CD4-positive, alpha-beta T cell (primary cell): ENCODE measurements at regions of chr4 and their contacts with region 1.

Region 1: GRCh38 chr4:106266201-106266600 is 49.8 kb downstream of the TBCK start:
- DNase-seq: peak in 3 of 14 experiments; percentile 11 to 27 (median 20)
- ATAC-seq: no peak
- H3K4me3 ChIP-seq: no peak overlapping the region
- H3K4me3 Mint-ChIP-seq: no peak overlapping the region
- H3K27ac ChIP-seq: no peak overlapping the region
- H3K27ac Mint-ChIP-seq: no peak overlapping the region
- H3K4me1 ChIP-seq: no peaks in the 10 kb centered on the region
- H3K4me1 Mint-ChIP-seq: peaks cover 3% of the 10 kb centered on the region
- H3K27me3 ChIP-seq: no peaks in the 10 kb centered on the region
- H3K27me3 Mint-ChIP-seq: no peaks in the 10 kb centered on the region
- CTCF ChIP-seq: peak; percentile 31

Region 2: DNA sequence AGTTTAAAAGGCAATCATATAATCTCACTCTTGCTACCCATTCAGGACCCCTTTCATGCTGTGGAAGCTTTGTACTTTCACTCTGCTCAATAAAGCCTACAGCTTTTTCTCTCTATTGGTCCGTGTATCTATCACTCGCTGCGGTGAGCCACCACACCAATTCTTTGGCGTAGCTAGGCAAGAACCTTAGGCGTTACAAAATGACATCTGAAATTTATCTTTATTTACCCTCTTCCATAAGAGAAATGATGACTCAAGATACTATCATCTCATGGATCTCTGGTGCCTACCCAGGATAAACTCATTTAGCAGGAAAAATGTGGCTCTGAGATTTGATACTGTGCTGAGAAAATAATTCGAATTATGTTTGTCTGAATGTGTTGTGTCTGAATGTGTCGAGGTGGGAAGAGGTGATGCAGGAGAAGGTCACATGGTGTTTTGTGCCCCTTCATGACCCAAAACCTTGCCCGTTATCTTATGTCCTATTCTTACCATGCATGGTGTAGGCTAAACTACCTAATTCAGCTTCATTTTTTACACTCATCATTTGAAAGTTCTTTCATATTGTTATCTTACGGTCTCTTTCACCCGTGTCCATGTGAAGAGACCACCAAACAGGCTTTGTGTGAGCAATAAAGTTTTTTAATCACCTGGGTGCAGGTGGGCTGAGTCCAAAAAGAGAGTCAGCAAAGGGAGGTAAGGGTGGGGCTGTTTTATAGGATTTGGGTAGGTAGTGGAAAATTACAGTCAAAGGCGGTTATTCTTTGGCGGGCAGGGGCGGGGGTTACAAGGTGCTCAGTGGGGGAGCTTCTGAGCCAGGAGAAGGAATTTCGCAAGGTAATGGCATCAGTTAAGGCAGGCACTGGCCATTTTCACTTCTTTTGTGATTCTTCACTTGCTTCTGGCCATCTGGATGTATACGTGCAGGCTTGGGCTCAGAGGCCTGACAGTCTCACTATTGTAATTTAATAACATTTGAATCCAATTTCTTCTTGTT is 144.0 kb after region 1 on chr4:
- CTCF ChIA-PET with region 1: no interaction called
- POLR2A ChIA-PET with region 1: no interaction called
- intact Hi-C with region 1: no loop called
- DNase-seq: no peak
- ATAC-seq: no peak
- H3K4me3 ChIP-seq: no peak overlapping the region
- H3K4me3 Mint-ChIP-seq: no peak overlapping the region
- H3K27ac ChIP-seq: no peak overlapping the region
- H3K27ac Mint-ChIP-seq: no peak overlapping the region
- H3K4me1 ChIP-seq: no peaks in the 10 kb centered on the region
- H3K4me1 Mint-ChIP-seq: no peaks in the 10 kb centered on the region
- H3K27me3 ChIP-seq: no peaks in the 10 kb centered on the region
- H3K27me3 Mint-ChIP-seq: peaks cover 12% of the 10 kb centered on the region
- CTCF ChIP-seq: no peak

Region 3: GRCh38 chr4:106502106-106502699 is 236.0 kb after region 1 on chr4:
- CTCF ChIA-PET with region 1: interaction called, 3 read pairs
- POLR2A ChIA-PET with region 1: no interaction called
- intact Hi-C with region 1: loop called (anchors 5 to 10 kb)
- DNase-seq: peak in 7 of 14 experiments; percentile 3 to 31 (median 10)
- ATAC-seq: no peak
- H3K4me3 ChIP-seq: no peak overlapping the region
- H3K4me3 Mint-ChIP-seq: no peak overlapping the region
- H3K27ac ChIP-seq: no peak overlapping the region
- H3K27ac Mint-ChIP-seq: no peak overlapping the region
- H3K4me1 ChIP-seq: no peaks in the 10 kb centered on the region
- H3K4me1 Mint-ChIP-seq: no peaks in the 10 kb centered on the region
- H3K27me3 ChIP-seq: no peaks in the 10 kb centered on the region
- H3K27me3 Mint-ChIP-seq: peaks cover 25% of the 10 kb centered on the region
- CTCF ChIP-seq: peak; percentile 52